Heart left ventricle (tissue), 16 donors: ENCODE measurements at regions of chr21 and their contacts with region 1.

Region 1: GRCh38 chr21:38805328-38806152 is at the start of gene ETS2:
- DNase-seq: peak; percentile 93 to 96 (median 95)
- ATAC-seq: peak; percentile 88 to 94 (median 92)
- H3K4me3 ChIP-seq: peak within 1 kb of the TSS; percentile 67 to 99 (median 94)
- H3K27ac ChIP-seq: peak within 1 kb of the TSS; percentile 87 to 99 (median 98)
- H3K4me1 ChIP-seq: peaks cover 0 to 42% (median 17%) of the 10 kb centered on the region in 12 donors
- H3K27me3 ChIP-seq: no peaks in the 10 kb centered on the region
- CTCF ChIP-seq: peak in 3 of 12 donors; percentile 10 to 16 (median 13)
- POLR2A ChIP-seq: peak in 1 of 2 donors; percentile 93
- total RNA-seq, gene ETS2: 27.9 to 92.7 (median 45.1) TPM

Region 2: GRCh38 chr21:38438476-38438893 is 367.1 kb before region 1 on chr21:
- intact Hi-C with region 1: no loop called
- DNase-seq: peak; percentile 44 to 79 (median 59)
- ATAC-seq: peak; percentile 33 to 62 (median 60)
- H3K4me3 ChIP-seq: no peak overlapping the region
- H3K27ac ChIP-seq: no peak overlapping the region
- H3K4me1 ChIP-seq: peaks cover 3 to 57% (median 27%) of the 10 kb centered on the region in 12 donors
- H3K27me3 ChIP-seq: no peaks in the 10 kb centered on the region
- CTCF ChIP-seq: no peak
- POLR2A ChIP-seq: no peak

Region 3: DNA sequence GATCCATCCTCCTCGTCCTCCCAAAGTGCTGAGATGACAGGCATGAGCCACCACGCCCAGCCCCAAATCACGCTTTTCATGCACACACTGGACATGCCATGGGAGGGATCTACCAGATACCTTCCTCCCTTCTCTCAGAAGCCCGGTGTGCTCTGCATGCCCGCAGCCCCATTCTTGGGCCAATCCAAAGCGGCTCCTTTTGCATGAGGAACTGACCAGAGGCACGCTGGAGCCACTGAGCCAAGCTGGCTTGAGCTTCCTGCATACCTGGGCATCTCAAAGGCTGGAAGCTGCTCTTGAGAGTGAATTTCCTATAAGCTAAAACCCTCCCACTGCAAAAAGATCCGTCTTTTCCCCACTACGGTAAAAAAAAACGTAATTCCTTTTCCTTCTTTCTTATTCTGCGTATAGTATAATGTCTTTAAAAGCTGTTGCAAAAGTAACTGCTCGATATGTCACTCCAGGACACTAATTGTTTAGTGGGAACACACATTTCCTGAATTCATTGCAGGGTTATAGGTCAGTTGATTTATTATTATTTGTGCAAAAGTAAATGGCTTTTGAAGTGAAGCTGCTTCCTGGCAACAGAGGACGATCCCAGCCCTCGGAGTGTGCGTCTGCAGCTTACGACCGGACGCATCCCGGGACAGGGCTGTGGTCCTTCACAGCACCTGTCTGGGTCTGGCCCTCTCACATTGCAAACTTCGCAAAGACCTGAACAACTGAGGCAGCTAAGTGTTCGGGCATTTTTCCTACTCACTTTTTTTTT is 61.6 kb before region 1 on chr21:
- intact Hi-C with region 1: loop called in 3 of 10 experiments (anchors 5 to 10 kb)
- DNase-seq: peak in 2 of 5 donors; percentile 32 to 62
- ATAC-seq: peak; percentile 39 to 95 (median 64)
- H3K4me3 ChIP-seq: peak overlapping the region in 5 of 12 donors; percentile 2 to 24 (median 16)
- H3K27ac ChIP-seq: peak overlapping the region in 9 of 12 donors; percentile 10 to 62 (median 46)
- H3K4me1 ChIP-seq: peaks cover 0 to 20% (median 0%) of the 10 kb centered on the region in 12 donors
- H3K27me3 ChIP-seq: no peaks in the 10 kb centered on the region
- CTCF ChIP-seq: no peak
- POLR2A ChIP-seq: no peak

Region 4: GRCh38 chr21:38930853-38931252 is 125.3 kb after region 1 on chr21:
- intact Hi-C with region 1: no loop called
- DNase-seq: no peak
- ATAC-seq: peak; percentile 39 to 77 (median 60)
- H3K4me3 ChIP-seq: no peak overlapping the region
- H3K27ac ChIP-seq: peak overlapping the region in 4 of 12 donors; percentile 10 to 83 (median 26)
- H3K4me1 ChIP-seq: peaks cover 0 to 37% (median 7%) of the 10 kb centered on the region in 12 donors
- H3K27me3 ChIP-seq: no peaks in the 10 kb centered on the region
- CTCF ChIP-seq: no peak
- POLR2A ChIP-seq: no peak

Region 5: DNA sequence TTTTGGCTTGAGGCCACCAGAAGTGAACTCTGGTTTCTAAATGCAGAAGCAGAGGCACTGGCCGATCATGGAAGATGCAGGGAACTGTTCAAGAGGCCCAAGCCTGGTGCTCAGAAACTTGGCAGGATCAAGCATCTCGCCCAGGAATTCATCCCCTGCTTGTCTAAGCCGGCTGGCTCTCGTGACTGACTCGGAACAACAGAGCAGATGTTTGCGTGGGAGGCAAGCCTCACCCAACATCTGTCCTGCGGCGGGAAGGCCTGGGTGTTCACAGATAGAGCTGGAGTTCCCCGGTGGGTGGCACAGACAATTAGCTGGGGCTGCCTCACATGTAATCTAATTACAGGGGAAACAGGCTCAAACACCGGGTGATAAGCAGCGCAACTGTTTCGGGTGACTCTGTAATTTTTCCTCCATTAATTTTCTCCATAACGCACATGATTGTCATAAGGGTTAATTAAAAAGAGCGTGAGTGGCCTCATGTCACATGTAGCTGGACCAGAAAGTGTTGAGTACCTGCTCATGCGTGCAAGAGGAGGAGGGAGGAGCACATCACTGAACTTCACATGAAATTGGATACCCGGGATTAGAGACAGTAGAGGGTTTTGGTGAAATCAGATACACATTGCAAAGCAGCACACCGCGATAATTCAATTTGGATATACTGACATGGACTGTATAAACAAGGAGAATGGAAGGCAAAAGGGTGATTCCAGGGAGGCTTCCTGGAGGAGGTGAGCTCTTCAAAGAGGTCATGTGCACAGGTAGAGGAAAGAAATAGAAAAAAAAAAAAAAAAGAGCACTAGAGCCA is 180.2 kb after region 1 on chr21:
- intact Hi-C with region 1: loop called in 4 of 10 experiments (anchors 5 kb)
- DNase-seq: peak; percentile 74 to 89 (median 82)
- ATAC-seq: peak; percentile 53 to 74 (median 70)
- H3K4me3 ChIP-seq: no peak overlapping the region
- H3K27ac ChIP-seq: peak overlapping the region in 10 of 12 donors; percentile 10 to 75 (median 58)
- H3K4me1 ChIP-seq: peaks cover 7 to 68% (median 63%) of the 10 kb centered on the region in 12 donors
- H3K27me3 ChIP-seq: no peaks in the 10 kb centered on the region
- CTCF ChIP-seq: no peak
- POLR2A ChIP-seq: no peak

Region 6: GRCh38 chr21:39016740-39017315 is 211.3 kb after region 1 on chr21:
- intact Hi-C with region 1: loop called in 2 of 10 experiments (anchors 10 kb)
- DNase-seq: no peak
- ATAC-seq: peak in 3 of 4 donors; percentile 44 to 51 (median 46)
- H3K4me3 ChIP-seq: no peak overlapping the region
- H3K27ac ChIP-seq: peak overlapping the region in 1 of 12 donors; percentile 28
- H3K4me1 ChIP-seq: peaks cover 0 to 64% (median 13%) of the 10 kb centered on the region in 12 donors
- H3K27me3 ChIP-seq: no peaks in the 10 kb centered on the region
- CTCF ChIP-seq: no peak
- POLR2A ChIP-seq: no peak

Region 7: GRCh38 chr21:39088831-39089380 is 283.4 kb after region 1 on chr21:
- intact Hi-C with region 1: loop called in 7 of 10 experiments (anchors 1 to 10 kb)
- DNase-seq: peak in 3 of 5 donors; percentile 48 to 75 (median 56)
- ATAC-seq: peak in 3 of 4 donors; percentile 47 to 68 (median 48)
- H3K4me3 ChIP-seq: no peak overlapping the region
- H3K27ac ChIP-seq: peak overlapping the region in 9 of 12 donors; percentile 82 to 100 (median 93)
- H3K4me1 ChIP-seq: peaks cover 0 to 76% (median 30%) of the 10 kb centered on the region in 12 donors
- H3K27me3 ChIP-seq: no peaks in the 10 kb centered on the region
- CTCF ChIP-seq: peak in 5 of 12 donors; percentile 16 to 45 (median 27)
- POLR2A ChIP-seq: no peak